WTC11 (cell line): ENCODE measurements at regions of chr1 and their contacts with region 1.

Region 1: GRCh38 chr1:16243936-16244649 is 7.1 kb upstream of the CPLANE2 start:
- DNase-seq: peak; percentile 85
- ATAC-seq: peak; percentile 81
- H3K4me3 Mint-ChIP-seq: no peak overlapping the region
- H3K27ac Mint-ChIP-seq: 0 out of 2 replicates have a peak overlapping the region, but pooled peaks have one; percentile 26
- H3K4me1 Mint-ChIP-seq: peaks cover 6% of the 10 kb centered on the region; the same call in 1 of the 2 replicates
- H3K27me3 Mint-ChIP-seq: no peaks in the 10 kb centered on the region
- CTCF ChIP-seq: peak; percentile 79

Region 2: DNA sequence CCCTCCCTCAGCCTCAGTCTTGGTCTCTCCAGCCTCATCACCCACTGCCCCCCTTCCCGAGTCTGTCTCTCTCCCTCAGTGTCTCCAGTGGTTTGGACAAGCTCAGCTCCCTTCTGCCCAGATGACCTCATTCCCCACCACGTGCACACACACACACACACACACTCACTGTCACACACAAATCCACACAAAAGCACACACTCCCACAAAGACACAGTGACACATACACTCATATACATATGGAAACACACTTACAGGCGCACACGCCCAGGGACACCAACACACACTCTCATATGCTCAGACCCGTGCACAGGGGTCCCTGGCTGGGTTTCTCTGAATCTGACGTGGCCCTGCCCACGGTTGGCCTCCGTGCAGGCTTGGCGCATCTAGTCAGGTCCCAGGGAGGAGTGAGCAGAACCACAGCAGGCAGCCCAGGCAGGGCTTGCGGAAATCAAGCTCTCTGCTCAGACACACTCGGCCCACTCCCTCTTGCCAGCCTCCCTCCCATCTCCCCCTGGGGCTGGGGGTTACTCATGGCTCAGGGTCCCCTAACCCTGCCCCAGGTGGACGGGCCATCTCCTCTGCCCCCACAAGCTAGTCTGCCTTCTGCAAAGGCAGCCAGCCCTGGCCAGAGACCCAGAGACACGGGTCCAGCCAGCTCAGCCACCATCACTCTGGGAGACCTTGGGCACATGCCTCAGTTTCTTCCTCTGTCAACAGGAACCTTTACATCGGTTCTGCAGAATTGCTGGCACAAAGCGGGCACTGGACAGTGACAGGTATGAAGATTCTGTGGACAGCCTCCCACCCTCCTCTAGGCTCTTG is 132.1 kb before region 1 on chr1:
- CTCF ChIA-PET with region 1: no interaction called
- POLR2A ChIA-PET with region 1: no interaction called
- DNase-seq: no peak
- ATAC-seq: no peak
- H3K4me3 Mint-ChIP-seq: no peak overlapping the region
- H3K27ac Mint-ChIP-seq: no peak overlapping the region
- H3K4me1 Mint-ChIP-seq: peaks cover 34% of the 10 kb centered on the region
- H3K27me3 Mint-ChIP-seq: peaks cover 11% of the 10 kb centered on the region
- CTCF ChIP-seq: no peak

Region 3: GRCh38 chr1:16206547-16207317 is 37.4 kb before region 1 on chr1:
- CTCF ChIA-PET with region 1: interaction called, 21 read pairs
- POLR2A ChIA-PET with region 1: no interaction called
- DNase-seq: peak; percentile 99
- ATAC-seq: peak; percentile 92
- H3K4me3 Mint-ChIP-seq: peak overlapping the region; percentile 89
- H3K27ac Mint-ChIP-seq: peak overlapping the region; percentile 98
- H3K4me1 Mint-ChIP-seq: peaks cover 35% of the 10 kb centered on the region
- H3K27me3 Mint-ChIP-seq: no peaks in the 10 kb centered on the region
- CTCF ChIP-seq: no peak

Region 4: DNA sequence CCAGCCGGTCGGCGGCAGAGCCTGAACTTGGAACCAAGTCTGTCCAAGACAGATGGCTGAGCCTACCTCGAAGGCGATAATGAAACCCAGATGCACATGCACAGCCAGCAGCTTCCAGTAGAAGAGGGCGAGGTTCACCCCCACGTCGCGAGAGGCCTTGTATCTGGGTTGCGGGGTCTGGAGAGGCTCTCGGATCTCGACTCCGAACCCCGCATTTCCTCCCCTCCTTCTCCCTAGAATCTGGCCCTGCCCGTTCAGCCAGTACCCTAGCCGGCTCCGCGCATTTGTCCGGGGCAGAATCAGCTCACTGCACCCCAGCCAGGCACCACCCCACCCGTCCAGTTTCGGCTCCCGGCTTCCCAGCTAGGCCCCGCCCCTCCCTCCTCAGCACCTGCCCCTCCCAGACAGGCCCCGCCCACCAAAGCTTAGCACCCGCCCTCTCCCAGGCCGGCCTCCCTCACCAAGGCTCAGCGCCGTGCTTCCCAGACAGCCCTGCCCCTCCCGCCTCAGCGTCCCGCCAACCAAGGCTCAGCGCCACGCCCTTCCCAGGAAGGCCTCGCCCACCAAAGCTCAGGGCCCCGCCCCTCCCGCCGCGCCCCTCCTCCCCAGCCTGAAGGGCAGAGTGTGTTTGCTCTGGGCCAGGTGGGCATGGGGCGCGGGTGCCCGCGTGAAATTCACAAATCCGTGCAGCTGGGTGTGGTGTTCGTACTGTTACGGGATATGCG is 26.9 kb before region 1 on chr1:
- CTCF ChIA-PET with region 1: interaction called, 23 read pairs
- POLR2A ChIA-PET with region 1: no interaction called
- DNase-seq: peak; percentile 100
- ATAC-seq: peak; percentile 87
- H3K4me3 Mint-ChIP-seq: peak overlapping the region; percentile 92
- H3K27ac Mint-ChIP-seq: no peak overlapping the region
- H3K4me1 Mint-ChIP-seq: peaks cover 26% of the 10 kb centered on the region
- H3K27me3 Mint-ChIP-seq: peaks cover 36% of the 10 kb centered on the region
- CTCF ChIP-seq: no peak

Region 5: DNA sequence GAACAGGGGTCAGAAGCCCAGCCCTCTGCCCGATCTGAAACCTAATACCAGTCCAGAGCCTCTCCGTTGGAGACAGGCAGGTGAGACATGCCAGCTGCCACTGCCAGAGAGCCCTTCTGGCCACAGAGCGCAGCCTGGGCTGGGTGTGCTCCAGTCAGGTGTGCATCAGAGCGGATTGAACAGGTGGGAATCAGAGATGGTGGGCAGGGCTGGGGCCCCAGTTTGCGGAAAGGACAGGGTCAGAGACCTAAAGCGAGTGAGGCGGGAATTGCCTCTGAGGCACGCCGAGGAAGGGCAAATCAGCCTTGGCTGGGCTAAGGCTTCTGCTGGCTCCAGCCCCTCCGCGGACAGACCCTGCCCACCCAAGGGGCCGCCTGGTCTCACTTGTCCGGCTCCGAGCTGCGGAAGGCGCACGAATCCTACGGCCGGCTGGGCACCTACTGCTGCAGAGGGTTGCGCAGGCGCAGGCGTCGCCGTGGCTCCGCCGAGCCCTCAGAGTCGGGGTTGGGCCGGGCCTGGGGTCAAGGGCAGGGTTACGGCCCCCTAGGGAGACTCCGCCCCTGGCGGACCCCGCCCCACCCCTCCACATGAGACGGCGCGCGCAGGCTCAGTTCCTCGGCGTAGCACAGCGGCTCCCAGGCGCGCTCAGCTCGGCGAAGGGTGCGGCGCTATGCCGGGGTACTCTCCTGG is 17.5 kb before region 1 on chr1:
- CTCF ChIA-PET with region 1: interaction called, 11 read pairs
- POLR2A ChIA-PET with region 1: no interaction called
- DNase-seq: peak; percentile 91
- ATAC-seq: peak; percentile 89
- H3K4me3 Mint-ChIP-seq: peak overlapping the region; percentile 79
- H3K27ac Mint-ChIP-seq: no peak overlapping the region
- H3K4me1 Mint-ChIP-seq: peaks cover 23% of the 10 kb centered on the region
- H3K27me3 Mint-ChIP-seq: peaks cover 61% of the 10 kb centered on the region
- CTCF ChIP-seq: no peak